Endothelial cell of umbilical vein (primary cell): ENCODE measurements at regions of chr9 and their contacts with region 1.

Region 1: DNA sequence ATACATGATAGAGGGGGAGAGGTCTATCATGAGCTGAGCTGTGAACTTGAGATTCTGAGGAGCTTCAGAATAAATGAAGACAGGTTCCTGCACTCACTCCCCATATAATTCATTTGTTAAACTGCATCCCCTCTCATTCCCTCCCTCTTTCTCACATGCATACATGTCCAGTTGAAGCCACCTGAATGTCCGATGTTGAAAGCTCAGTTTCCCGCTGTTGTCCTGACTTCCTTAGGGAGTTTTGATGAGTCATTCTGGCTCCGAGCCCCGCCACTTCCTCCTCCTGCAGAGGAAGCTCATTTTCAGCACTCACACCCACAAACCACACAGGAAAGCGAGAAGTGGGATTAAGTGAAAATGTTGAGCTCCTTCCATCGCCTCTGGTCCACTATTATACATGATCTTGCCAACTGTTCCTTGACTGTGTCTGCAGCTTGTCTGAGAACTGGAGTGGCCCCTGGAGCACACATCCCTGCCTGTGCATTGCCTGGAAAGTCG is 121.2 kb downstream of the CEMIP2 start:
- DNase-seq: peak; percentile 93
- H3K4me3 ChIP-seq: peak overlapping the region in 1 of 3 experiments; percentile 15
- H3K27ac ChIP-seq: peak overlapping the region; percentile 52
- H3K4me1 ChIP-seq: peaks cover 24% of the 10 kb centered on the region
- H3K27me3 ChIP-seq: no peaks in the 10 kb centered on the region
- CTCF ChIP-seq: no peak
- POLR2A ChIP-seq: no peak

Region 2: GRCh38 chr9:71581101-71581500 is 66.0 kb before region 1 on chr9:
- CTCF ChIA-PET with region 1: no interaction called
- POLR2A ChIA-PET with region 1: no interaction called
- dilution Hi-C with region 1: no loop called
- intact Hi-C with region 1: no loop called
- DNase-seq: no peak
- H3K4me3 ChIP-seq: no peak overlapping the region
- H3K27ac ChIP-seq: no peak overlapping the region
- H3K4me1 ChIP-seq: no peaks in the 10 kb centered on the region
- H3K27me3 ChIP-seq: peaks cover 0 to 3% of the 10 kb centered on the region in 2 experiments
- CTCF ChIP-seq: no peak
- POLR2A ChIP-seq: no peak

Region 3: DNA sequence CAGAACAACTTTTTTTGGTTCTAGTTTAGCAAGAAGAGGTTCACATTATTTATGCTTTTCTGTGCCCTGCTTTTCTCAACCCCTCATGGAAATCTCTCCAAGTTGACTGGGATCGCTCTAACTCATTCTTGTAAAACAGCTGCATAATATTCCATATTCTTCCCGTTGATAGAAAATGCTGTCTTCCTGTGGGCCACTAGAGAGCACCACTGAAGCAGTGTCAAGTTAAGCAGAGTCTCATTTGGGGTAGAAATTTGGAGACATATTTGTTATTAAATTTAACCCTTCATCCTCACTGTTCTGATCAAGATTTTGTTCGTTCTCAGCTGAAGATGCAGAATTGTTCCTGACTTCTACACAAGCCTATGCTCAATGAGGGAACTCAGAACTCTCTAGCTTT is 18.9 kb before region 1 on chr9:
- CTCF ChIA-PET with region 1: interaction called, 17 read pairs
- POLR2A ChIA-PET with region 1: no interaction called
- dilution Hi-C with region 1: no loop called
- intact Hi-C with region 1: loop called (anchors 1 kb)
- DNase-seq: no peak
- H3K4me3 ChIP-seq: no peak overlapping the region
- H3K27ac ChIP-seq: no peak overlapping the region
- H3K4me1 ChIP-seq: peaks cover 20% of the 10 kb centered on the region
- H3K27me3 ChIP-seq: no peaks in the 10 kb centered on the region
- CTCF ChIP-seq: no peak
- POLR2A ChIP-seq: no peak

Region 4: GRCh38 chr9:71670121-71670520 is 23.0 kb after region 1 on chr9:
- CTCF ChIA-PET with region 1: no interaction called
- POLR2A ChIA-PET with region 1: no interaction called
- dilution Hi-C with region 1: no loop called
- intact Hi-C with region 1: no loop called
- DNase-seq: no peak
- H3K4me3 ChIP-seq: no peak overlapping the region
- H3K27ac ChIP-seq: no peak overlapping the region
- H3K4me1 ChIP-seq: no peaks in the 10 kb centered on the region
- H3K27me3 ChIP-seq: no peaks in the 10 kb centered on the region
- CTCF ChIP-seq: no peak
- POLR2A ChIP-seq: no peak

Region 5: DNA sequence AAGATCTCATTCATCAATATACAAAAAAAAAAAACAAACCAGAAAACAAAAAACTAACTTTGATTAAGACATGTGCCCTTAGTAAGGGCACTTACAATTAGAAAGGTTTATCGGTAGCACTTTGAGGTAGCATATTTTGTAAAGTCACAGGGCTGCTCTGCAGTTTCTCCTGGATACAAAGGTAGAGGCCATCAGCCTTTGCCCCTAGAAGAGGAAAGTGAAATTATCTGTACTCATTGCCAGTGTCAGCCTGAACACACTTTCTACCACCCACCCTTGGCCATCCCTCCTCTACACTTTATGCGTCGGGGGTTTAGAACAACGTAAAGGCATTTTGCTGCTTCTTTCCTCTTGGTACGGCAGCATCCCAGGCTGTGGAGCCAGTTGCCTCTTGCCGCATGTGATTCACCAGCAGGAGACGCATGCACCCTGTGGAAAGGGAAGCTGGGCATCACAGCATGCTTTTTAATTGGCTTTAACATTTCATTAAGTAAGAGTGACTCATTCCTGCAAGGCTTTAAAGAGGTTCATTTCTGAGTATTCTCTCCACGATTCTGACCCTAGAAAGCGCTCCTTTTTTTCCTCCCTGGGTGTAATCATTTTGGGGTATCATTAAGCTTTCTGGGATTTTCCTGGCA is 36.6 kb after region 1 on chr9:
- CTCF ChIA-PET with region 1: interaction called, 8 read pairs
- POLR2A ChIA-PET with region 1: no interaction called
- dilution Hi-C with region 1: no loop called
- intact Hi-C with region 1: loop called (anchors 2 kb)
- DNase-seq: no peak
- H3K4me3 ChIP-seq: no peak overlapping the region
- H3K27ac ChIP-seq: no peak overlapping the region
- H3K4me1 ChIP-seq: peaks cover 4% of the 10 kb centered on the region
- H3K27me3 ChIP-seq: no peaks in the 10 kb centered on the region
- CTCF ChIP-seq: no peak
- POLR2A ChIP-seq: no peak